Left cardiac atrium (tissue), 4 donors: ENCODE measurements at regions of chr5 and their contacts with region 1.

Region 1: DNA sequence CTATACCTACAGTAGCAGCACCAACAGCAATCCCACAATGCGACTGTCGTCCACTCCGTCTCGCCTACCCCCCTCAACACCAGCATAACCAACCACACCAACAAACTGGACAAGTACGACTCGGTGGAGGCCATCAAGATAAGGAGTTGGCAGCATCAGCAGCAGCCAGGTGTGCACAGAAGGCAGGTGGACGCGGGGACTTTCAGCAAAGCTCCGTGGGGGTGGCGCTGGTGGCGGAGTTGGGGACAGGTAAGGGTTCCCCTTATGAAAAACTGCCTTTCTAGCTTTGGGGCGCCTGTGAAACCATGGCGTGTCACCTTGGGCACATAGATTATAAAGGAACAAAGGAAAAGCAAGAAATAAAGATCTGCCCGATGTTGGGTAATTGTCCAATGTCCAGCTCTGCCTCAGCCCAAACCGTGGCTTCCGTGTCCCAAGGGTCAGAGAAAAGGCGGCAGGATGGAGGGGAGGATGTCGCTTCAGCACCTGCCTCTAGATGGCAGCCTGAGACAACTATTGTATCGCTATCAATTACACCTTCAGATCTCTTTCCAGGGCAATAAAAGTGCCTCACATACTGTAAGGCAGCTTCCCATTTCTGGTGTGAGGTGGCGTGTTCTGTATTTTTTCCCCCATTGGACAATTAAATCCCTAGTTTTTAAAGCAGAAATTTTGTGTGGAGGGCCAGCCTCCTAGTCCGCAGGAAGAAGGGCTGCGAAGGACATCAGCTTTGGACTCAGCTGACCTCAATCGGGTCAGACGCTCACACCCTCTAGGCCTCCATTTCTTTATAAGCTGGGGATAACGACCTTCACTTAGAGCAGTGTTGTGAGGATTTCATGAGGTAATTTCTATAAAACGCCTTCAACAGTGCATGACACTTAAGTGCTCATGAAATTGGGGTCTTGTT is 58.8 kb downstream of the MTRR start:
- DNase-seq: peak; percentile 36
- ATAC-seq: peak; percentile 65 to 80

Region 2: GRCh38 chr5:7181841-7182240 is 745.9 kb before region 1 on chr5:
- intact Hi-C with region 1: no loop called
- DNase-seq: no peak
- ATAC-seq: no peak

Region 3: DNA sequence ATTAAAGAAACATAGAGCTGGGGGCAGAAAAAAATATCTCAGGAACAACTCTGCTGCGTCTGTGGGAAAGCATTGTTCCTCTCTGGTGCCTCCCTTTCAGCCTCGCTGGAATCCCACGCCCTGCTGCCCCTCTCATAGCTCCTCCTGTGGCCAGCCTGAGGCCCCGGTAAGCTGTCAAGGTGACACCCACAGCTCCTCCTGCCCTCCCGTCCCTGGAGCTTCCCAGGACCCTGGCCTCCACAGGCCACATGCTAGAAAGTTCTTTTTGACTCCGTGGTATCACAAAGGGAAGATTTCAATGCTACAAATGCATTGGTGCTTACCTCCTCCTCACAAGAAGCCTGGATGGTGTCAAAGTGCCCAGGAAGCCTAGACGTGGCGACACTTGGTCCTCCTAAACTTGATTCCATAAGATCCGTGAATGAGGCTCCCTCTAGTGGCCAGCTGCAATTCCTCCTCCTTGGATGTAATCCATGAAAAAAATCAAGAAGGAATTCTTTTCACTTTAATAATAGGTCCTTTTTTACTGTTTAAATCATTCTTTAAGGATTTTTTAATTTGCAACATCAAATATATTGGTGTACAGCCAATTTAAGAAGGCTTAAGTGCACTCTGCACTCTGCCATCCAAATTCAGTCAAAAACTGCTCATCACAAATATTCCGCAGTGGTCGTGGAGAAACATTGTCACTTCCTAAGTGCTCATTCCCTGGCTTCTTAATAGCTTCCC is 181.7 kb before region 1 on chr5:
- intact Hi-C with region 1: no loop called
- DNase-seq: peak; percentile 61
- ATAC-seq: peak in 1 of 2 donors; percentile 52

Region 4: GRCh38 chr5:9197881-9198260 is 1270.2 kb after region 1 on chr5:
- intact Hi-C with region 1: loop called in 1 of 2 experiments (anchors 10 kb)
- DNase-seq: no peak
- ATAC-seq: no peak